OCI-LY7 (cell line): ENCODE measurements at regions of chr19 and their contacts with region 1.

Region 1: GRCh38 chr19:20278342-20278741 is 111.3 kb downstream of the ZNF486 start:
- DNase-seq: no peak
- H3K4me3 ChIP-seq: no peak overlapping the region
- H3K27ac ChIP-seq: no peak overlapping the region
- H3K4me1 ChIP-seq: peaks cover 36% of the 10 kb centered on the region
- CTCF ChIP-seq: 0 out of 2 replicates have a peak, but pooled peaks have one; percentile 16

Region 2: DNA sequence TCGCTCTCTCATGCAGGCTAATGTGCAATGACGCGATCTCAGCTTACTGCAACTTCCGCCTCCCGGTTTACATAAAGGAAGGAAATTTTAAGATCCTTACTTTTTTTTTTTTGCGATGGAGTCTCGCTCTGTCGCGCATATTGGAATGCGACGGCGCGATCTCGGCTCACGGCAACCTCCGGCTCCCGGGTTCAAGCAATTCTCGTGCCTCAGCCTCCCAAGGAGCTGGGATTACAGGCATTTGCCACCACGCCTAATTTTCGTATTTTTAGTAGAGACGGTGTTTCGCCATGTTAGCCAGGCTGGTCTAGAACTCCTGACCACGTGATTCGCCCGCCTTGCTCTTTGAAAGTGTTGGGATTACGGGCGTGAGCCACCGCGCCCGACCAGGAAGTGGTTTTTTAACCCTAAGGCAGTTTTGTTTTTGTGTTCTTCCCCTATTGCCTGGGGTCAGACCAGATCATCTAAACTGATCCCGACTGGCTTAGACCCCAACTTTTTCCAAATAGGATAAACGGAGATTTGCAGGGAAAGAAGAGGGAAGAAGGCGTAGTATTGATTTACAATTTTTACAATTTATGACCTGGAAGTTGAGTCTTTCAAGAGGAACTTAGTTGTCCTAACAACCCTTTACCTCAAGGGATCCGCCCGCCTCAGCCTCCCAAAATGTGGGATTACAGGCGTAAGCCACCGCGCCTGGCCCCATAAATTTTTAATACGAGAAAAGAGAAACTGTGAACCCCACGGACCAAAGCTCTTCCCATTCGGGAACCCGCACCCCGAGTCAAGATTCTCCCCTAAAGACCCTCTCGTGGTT is 145.2 kb after region 1 on chr19:
- CTCF ChIA-PET with region 1: no interaction called
- POLR2A ChIA-PET with region 1: interaction called, 3 read pairs
- intact Hi-C with region 1: loop called (anchors 10 kb)
- DNase-seq: peak; percentile 38
- H3K4me3 ChIP-seq: peak overlapping the region; percentile 100
- H3K27ac ChIP-seq: peak overlapping the region; percentile 91
- H3K4me1 ChIP-seq: peaks cover 16% of the 10 kb centered on the region
- CTCF ChIP-seq: no peak